Activated T-helper 1 cell treated with anti-CD3 and anti-CD28 coated beads, Interleukin-12 subunit alpha, Interleukin-12 subunit beta, Interleukin-2, Interleukin-4 antibody, amounts not matched to agents 30 ng/mL and 10 ng/mL and 1 ng/mL, durations not matched to agents 14 hours and 24 hours and 36 hours (primary cell): ENCODE measurements at regions of chr11 and their contacts with region 1.

Region 1: GRCh38 chr11:35066783-35067423 is 72.1 kb upstream of the CD44 start:
- DNase-seq: peak; percentile 25
- H3K4me3 Mint-ChIP-seq: peak overlapping the region; percentile 8
- H3K27ac Mint-ChIP-seq: peak overlapping the region; percentile 66
- H3K4me1 Mint-ChIP-seq: peaks cover 31% of the 10 kb centered on the region
- H3K27me3 Mint-ChIP-seq: no peaks in the 10 kb centered on the region

Region 2: GRCh38 chr11:35006389-35007128 is 60.3 kb before region 1 on chr11:
- intact Hi-C with region 1: loop called (anchors 1 kb)
- DNase-seq: no peak
- H3K4me3 Mint-ChIP-seq: no peak overlapping the region
- H3K27ac Mint-ChIP-seq: peak overlapping the region; percentile 61
- H3K4me1 Mint-ChIP-seq: peaks cover 59% of the 10 kb centered on the region
- H3K27me3 Mint-ChIP-seq: peaks cover 18% of the 10 kb centered on the region

Region 3: DNA sequence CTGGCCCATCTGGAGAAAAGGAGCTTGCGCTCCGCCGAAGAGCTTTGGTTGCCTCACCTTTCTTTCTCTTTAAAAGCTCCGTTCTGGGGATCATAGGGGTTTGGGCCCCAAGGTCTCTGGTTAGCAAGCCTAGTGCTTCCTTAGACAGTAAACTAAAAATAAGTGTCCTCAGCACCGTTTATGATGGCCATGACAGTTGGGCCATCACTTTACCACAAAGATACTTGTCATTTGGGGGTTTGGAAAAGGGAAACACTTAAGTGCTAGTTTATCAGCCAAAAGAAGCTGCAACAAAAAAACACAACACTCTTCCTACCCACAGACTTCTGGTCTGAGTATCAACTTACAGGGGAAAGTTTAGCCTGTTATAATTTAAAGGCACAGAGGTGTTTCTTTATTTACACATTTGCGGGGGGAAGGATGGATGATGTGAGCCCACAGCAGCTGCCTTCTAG is 16.3 kb before region 1 on chr11:
- intact Hi-C with region 1: loop called (anchors 1 kb)
- DNase-seq: no peak
- H3K4me3 Mint-ChIP-seq: peak overlapping the region; percentile 79
- H3K27ac Mint-ChIP-seq: peak overlapping the region; percentile 93
- H3K4me1 Mint-ChIP-seq: peaks cover 69% of the 10 kb centered on the region
- H3K27me3 Mint-ChIP-seq: peaks cover 2% of the 10 kb centered on the region

Region 4: DNA sequence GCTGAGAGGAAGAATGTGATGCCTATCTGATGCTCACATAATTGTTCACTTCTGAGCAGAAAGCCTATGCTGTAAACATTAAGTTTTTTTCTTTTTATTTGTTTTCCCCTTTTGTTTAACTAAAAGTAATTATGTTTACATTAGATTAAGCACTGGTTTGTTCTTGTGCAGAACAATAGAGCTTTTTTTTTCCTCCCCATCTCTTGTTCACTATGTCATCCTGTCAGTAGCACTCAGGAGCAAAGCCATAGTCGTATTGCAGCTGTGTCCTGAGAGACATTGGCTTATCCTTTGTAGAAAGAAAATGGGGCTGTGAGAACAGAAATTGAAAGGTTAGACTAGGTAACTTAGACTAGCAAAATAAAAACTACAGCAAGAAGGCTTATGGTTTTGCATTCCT is 1832.9 kb after region 1 on chr11:
- intact Hi-C with region 1: no loop called
- DNase-seq: no peak
- H3K4me3 Mint-ChIP-seq: no peak overlapping the region
- H3K27ac Mint-ChIP-seq: no peak overlapping the region
- H3K4me1 Mint-ChIP-seq: no peaks in the 10 kb centered on the region
- H3K27me3 Mint-ChIP-seq: no peaks in the 10 kb centered on the region